AG04449 (cell line): ENCODE measurements at regions of chr18 and their contacts with region 1.

Region 1: GRCh38 chr18:75478996-75479880 is 51.7 kb upstream of the SMIM21 start:
- DNase-seq: no peak
- H3K4me3 ChIP-seq: no peak overlapping the region
- CTCF ChIP-seq: peak; percentile 44

Region 2: DNA sequence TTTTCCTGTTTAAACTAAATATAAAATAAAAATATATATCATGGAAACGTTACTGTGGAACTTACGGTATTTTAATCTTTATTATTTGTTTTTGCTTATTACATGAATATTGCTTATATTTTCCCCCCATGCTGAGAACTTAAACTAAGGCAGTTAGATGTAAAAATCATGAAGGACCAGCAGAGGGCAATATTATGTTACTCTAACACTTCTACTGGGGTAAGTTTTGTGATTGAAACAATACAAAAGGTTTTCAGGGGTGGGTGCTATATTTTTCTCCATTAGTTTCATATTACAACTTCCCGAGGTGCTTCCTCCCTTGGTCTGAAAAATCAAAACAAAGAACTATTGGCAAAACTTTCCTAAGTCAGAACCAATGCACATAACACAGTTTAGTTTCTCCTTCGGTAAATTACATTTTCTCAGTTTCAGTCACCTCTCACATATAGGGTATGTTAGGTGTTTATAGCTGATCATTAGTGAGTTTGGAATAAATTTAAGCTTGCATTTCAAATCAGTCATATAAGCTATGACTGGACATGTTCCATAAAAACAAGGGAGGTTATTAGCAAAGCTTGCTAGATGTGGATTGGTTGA is 826.7 kb before region 1 on chr18:
- CTCF ChIA-PET with region 1: interaction called, 15 read pairs
- POLR2A ChIA-PET with region 1: no interaction called
- DNase-seq: no peak
- H3K4me3 ChIP-seq: no peak overlapping the region
- CTCF ChIP-seq: peak; percentile 35

Region 3: DNA sequence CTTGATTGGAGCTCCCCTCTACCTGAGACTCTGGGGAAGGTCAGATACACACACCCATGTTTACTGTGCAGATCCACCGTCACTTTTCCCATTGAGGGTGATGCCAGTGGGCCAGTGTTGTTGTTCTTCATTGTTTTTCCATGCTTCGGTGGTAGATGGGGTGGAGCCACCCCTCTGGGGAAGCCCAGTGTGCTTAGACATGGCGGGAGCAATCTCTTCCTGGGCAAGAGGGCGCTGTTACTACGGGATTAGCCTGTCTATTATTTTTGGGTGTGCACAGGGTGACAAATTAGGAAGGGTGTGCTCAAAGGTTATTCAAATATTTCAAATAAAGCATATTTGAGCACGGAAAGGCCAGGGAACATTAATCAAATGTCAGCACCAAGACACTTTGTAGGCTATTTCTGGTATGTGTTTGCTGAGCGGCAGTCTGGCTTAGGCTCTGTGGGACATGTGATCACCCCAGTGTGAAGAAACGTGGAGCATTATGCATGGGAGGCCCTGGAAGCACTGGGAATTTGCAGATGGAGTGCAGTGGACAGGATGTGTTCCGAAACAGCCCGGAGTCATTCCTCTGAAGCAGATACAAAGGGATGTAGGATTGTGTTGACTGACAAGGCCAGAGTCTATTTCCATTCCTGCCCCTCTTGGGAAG is 16.9 kb before region 1 on chr18:
- CTCF ChIA-PET with region 1: interaction called, 10 read pairs
- POLR2A ChIA-PET with region 1: no interaction called
- DNase-seq: no peak
- H3K4me3 ChIP-seq: no peak overlapping the region
- CTCF ChIP-seq: no peak

Region 4: DNA sequence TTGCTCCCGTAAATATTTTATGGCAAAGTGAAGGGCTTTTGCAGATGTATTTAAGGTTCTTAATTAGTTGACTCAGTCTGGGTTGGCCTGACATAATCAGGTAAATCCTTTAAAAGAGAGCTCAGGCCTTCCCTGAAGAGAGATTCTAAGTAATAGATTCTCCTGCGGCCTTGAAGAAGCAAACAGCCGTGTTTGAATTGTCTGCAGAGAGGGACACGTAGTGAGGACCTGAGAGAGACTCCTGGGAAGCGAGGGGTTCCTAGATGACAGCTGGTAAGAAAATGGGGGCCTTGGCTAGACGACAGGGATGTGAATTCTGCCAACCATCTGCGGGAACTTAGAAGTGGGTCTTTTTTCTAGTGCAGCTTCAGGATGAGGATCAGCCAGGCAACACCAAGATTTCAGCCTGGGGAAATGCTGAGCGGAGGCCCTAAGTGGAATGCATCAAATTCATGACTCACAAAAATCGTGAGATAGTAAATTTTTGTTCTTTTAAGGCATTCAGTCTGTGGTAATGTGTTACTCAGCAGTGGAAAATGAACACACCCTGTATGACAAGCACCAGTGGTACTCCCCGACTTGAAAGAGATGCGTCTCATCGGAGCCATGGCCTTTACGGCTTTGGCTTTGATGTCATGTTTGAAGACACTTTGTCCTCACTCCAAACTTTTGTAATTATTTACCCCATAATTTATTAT is 10.4 kb after region 1 on chr18:
- CTCF ChIA-PET with region 1: interaction called, 42 read pairs
- POLR2A ChIA-PET with region 1: no interaction called
- DNase-seq: peak; percentile 80
- H3K4me3 ChIP-seq: no peak overlapping the region
- CTCF ChIP-seq: no peak